T-cell (primary cell): ENCODE measurements at regions of chr3 and their contacts with region 1.

Region 1: DNA sequence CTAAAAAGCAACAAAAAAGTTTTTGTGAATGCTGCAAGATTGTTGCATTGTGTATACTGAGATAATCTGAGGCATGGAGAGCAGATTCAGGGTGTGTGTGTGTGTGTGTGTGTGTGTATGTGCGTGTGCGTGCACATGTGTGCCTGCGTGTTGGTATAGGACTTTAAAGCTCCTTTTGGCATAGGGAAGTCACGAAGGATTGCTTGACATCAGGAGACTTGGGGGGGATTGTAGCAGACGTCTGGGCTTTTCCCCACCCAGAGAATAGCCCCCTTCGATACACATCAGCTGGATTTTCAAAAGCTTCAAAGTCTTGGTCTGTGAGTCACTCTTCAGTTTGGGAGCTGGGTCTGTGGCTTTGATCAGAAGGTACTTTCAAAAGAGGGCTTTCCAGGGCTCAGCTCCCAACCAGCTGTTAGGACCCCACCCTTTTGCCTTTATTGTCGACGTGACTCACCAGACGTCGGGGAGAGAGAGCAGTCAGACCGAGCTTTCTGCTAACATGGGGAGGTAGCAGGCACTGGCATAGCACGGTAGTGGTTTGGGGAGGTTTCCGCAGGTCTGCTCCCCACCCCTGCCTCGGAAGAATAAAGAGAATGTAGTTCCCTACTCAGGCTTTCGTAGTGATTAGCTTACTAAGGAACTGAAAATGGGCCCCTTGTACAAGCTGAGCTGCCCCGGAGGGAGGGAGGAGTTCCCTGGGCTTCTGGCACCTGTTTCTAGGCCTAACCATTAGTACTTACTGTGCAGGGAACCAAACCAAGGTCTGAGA is 4.7 kb downstream of the BHLHE40 start:
- DNase-seq: peak in 34 of 35 experiments; percentile 36 to 87 (median 64)
- ATAC-seq: peak; percentile 46 to 58 (median 56)
- H3K4me3 ChIP-seq: peak overlapping the region in 1 of 2 donors; percentile 29
- H3K4me3 Mint-ChIP-seq: peak overlapping the region; percentile 50 to 95 (median 77)
- H3K27ac ChIP-seq: peak overlapping the region; percentile 82
- H3K27ac Mint-ChIP-seq: peak overlapping the region; percentile 84 to 95
- H3K4me1 ChIP-seq: peaks cover 22 to 64% of the 10 kb centered on the region in 2 experiments
- H3K4me1 Mint-ChIP-seq: peaks cover 62 to 75% (median 65%) of the 10 kb centered on the region in 3 donors
- H3K27me3 ChIP-seq: no peaks in the 10 kb centered on the region
- H3K27me3 Mint-ChIP-seq: no peaks in the 10 kb centered on the region

Region 2: DNA sequence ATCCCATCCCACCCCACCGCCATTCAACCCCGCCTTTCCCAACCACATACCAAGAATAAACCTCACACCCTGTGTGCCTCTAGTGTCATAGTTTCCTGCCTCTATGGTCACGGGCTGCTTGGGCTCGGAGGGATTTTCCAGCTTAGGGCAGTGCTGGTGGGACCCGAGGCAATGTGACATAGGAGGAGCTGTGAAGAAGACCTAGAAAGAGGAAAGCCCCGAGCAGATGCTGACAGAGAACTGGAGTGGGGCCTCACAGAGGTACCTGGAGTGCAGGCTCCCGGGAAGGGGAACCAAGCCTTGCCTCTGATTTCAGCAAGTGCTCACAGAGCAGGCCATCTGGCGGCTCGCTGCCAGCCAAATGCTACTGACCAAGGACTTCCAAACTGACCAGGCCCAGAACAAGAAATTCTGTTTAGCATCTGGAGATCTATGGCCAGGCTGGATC is 22.9 kb after region 1 on chr3:
- CTCF ChIA-PET with region 1: interaction called in 1 of 2 experiments, 6 read pairs
- POLR2A ChIA-PET with region 1: interaction called, 3 to 21 read pairs
- DNase-seq: peak in 32 of 35 experiments; percentile 42 to 90 (median 69)
- ATAC-seq: peak; percentile 41 to 87 (median 46)
- H3K4me3 ChIP-seq: no peak overlapping the region
- H3K4me3 Mint-ChIP-seq: peak overlapping the region in 1 of 3 donors; percentile 15
- H3K27ac ChIP-seq: peak overlapping the region; percentile 19
- H3K27ac Mint-ChIP-seq: peak overlapping the region; percentile 72 to 77
- H3K4me1 ChIP-seq: peaks cover 0 to 46% of the 10 kb centered on the region in 2 experiments
- H3K4me1 Mint-ChIP-seq: peaks cover 28 to 49% (median 30%) of the 10 kb centered on the region in 3 donors
- H3K27me3 ChIP-seq: no peaks in the 10 kb centered on the region
- H3K27me3 Mint-ChIP-seq: no peaks in the 10 kb centered on the region

Region 3: DNA sequence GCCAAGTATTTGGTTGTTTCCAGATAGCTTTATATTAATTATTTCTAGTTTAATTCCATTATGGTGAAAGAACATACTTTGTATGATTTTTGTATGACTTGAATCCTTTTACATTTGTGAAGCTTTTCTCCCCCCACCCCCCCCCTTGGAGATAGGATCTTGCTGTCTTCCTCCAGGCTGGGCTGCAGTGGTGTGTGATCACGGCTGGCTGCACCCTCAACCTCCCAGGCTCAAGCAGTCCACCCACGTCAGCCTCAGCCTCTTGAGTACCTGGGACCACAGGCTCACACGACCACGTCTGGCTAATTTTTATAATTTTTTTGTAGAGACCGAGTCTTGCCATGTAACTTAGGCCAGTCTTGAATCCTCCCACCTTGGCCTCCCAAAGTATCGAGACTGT is 167.7 kb after region 1 on chr3:
- CTCF ChIA-PET with region 1: no interaction called
- POLR2A ChIA-PET with region 1: no interaction called
- DNase-seq: no peak
- ATAC-seq: no peak
- H3K4me3 ChIP-seq: no peak overlapping the region
- H3K4me3 Mint-ChIP-seq: no peak overlapping the region
- H3K27ac ChIP-seq: no peak overlapping the region
- H3K27ac Mint-ChIP-seq: no peak overlapping the region
- H3K4me1 ChIP-seq: peaks cover 0 to 10% of the 10 kb centered on the region in 2 experiments
- H3K4me1 Mint-ChIP-seq: peaks cover 82 to 83% (median 82%) of the 10 kb centered on the region in 3 donors
- H3K27me3 ChIP-seq: no peaks in the 10 kb centered on the region
- H3K27me3 Mint-ChIP-seq: no peaks in the 10 kb centered on the region